ENCODE measurements at regions of chr22 and their contacts with region 1.

Region 1: GRCh38 chr22:37561212-37562048 is 1.1 kb downstream of the CDC42EP1 start:
- DNase-seq: peak; percentile 95
- ATAC-seq: peak; percentile 53
- H3K4me3 Mint-ChIP-seq: peak overlapping the region; percentile 73
- H3K27ac Mint-ChIP-seq: no peak overlapping the region
- H3K4me1 Mint-ChIP-seq: peaks cover 48% of the 10 kb centered on the region
- H3K27me3 Mint-ChIP-seq: peaks cover 52% of the 10 kb centered on the region
- CTCF ChIP-seq: peak; percentile 75

Region 2: GRCh38 chr22:37457093-37457893 is 104.1 kb before region 1 on chr22:
- CTCF ChIA-PET with region 1: no interaction called
- POLR2A ChIA-PET with region 1: no interaction called
- DNase-seq: peak; percentile 94
- ATAC-seq: peak; percentile 98
- H3K4me3 Mint-ChIP-seq: no peak overlapping the region
- H3K27ac Mint-ChIP-seq: no peak overlapping the region
- H3K4me1 Mint-ChIP-seq: peaks cover 2% of the 10 kb centered on the region; the same call in 1 of the 2 replicates
- H3K27me3 Mint-ChIP-seq: no peaks in the 10 kb centered on the region
- CTCF ChIP-seq: peak; percentile 96

Region 3: DNA sequence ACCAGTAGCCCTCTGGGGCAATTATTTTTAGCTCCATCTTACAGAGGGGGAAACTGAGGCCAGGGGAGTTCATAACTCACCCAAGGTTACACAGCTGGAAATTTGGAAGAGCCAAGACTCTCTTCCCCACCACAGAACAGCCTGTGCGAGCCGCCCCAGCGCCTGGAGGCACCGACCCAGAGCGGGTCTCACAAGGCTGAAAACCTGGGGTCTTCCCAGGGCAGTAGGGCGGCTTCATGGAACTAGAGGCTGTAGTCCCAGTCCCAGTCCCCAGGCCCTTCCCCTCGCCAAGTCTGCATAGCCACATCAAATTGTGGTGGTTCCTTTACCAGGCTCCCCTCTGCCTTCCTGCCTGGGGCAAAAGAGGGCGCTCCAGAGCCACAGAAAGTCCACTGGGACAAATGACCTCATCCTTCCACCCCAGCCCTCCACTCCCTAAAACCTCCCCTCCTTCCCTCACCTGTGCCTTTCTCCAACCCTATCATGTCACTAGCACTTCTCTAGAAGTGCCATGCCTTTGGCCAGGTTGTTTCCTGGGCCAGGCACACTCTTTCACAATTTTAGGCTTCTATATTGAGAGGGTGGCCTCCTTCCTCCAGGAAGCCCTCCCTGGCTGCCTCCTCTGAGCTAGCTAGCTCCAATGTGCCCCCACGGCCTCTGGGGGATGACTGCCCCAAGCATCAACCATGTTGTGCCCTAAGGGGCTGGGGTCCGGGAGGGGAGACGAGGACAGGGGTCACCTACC is 16.3 kb before region 1 on chr22:
- CTCF ChIA-PET with region 1: interaction called, 728 read pairs
- POLR2A ChIA-PET with region 1: interaction called, 24 read pairs
- DNase-seq: peak; percentile 92
- ATAC-seq: peak; percentile 74
- H3K4me3 Mint-ChIP-seq: peak overlapping the region; percentile 53
- H3K27ac Mint-ChIP-seq: peak overlapping the region; percentile 74; the same call in 1 of the 2 replicates
- H3K4me1 Mint-ChIP-seq: peaks cover 29% of the 10 kb centered on the region
- H3K27me3 Mint-ChIP-seq: no peaks in the 10 kb centered on the region; the same call in 1 of the 2 replicates
- CTCF ChIP-seq: peak; percentile 53; the same call in 1 of the 2 replicates

Region 4: DNA sequence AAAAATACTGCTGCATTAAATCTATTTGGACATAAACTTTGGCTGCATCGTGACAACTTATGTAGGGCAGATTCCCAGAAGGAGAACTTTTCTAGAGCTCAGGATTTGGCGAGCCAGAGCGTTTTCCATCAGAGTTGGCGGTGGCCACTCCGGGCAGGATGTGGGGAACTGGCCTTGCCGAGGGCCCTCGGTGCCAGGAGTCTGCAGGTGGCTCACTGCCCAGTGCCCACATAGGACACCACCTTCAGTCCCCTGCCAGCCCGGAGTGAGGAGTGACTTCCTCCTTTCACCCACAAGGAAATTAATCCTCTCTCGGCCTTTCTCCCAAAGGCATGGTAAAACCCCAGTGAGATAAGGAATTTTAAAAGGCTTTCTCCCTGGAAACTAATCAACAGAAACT is 20.1 kb after region 1 on chr22:
- CTCF ChIA-PET with region 1: interaction called, 22 read pairs
- POLR2A ChIA-PET with region 1: no interaction called
- DNase-seq: no peak
- ATAC-seq: no peak
- H3K4me3 Mint-ChIP-seq: no peak overlapping the region
- H3K27ac Mint-ChIP-seq: no peak overlapping the region
- H3K4me1 Mint-ChIP-seq: peaks cover 4% of the 10 kb centered on the region
- H3K27me3 Mint-ChIP-seq: no peaks in the 10 kb centered on the region; the same call in 1 of the 2 replicates
- CTCF ChIP-seq: no peak

Region 5: GRCh38 chr22:37601540-37602442 is 40.4 kb after region 1 on chr22:
- CTCF ChIA-PET with region 1: interaction called, 17 read pairs
- POLR2A ChIA-PET with region 1: interaction called, 8 read pairs
- DNase-seq: peak; percentile 69
- ATAC-seq: peak; percentile 98
- H3K4me3 Mint-ChIP-seq: peak overlapping the region; percentile 48
- H3K27ac Mint-ChIP-seq: peak overlapping the region; percentile 88
- H3K4me1 Mint-ChIP-seq: peaks cover 23% of the 10 kb centered on the region
- H3K27me3 Mint-ChIP-seq: no peaks in the 10 kb centered on the region; the same call in 1 of the 2 replicates
- CTCF ChIP-seq: no peak

Measured in WTC11 (cell line).